Activated CD4-positive, alpha-beta memory T cell treated with anti-CD3 and anti-CD28 coated beads for 36 hours (primary cell): ENCODE measurements at regions of chr1 and their contacts with region 1.

Region 1: DNA sequence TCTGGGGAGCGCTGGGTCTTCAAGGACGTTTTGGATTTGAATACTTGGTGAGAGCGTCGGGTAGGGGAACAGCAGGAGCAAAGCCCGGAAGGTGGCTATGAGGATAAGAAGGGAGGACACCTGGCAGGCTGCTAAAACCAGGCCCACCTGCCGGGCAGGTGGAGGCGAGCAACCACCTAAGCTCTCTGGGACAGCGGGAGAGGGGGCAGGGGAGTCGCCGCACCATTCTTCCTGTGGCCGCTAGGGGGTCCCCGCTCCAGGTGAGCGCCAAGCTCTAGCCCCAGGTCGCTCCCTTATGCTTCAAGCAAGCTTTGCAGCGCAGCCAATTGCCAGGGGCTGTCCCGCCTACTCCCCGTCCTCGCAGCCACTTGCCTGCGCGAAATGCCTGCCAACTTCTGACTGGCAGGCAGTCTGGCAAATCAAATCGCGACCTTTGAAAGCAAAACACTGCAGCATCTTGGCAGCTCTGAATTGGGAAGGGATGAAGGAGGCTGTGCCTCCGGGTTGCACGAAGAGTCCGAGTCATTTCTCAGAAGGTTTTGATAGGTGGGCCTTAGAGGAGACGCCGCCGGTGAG is at the start of gene NIPAL3:
- DNase-seq: peak; percentile 99
- H3K4me3 Mint-ChIP-seq: peak within 1 kb of the TSS; percentile 98
- H3K27ac Mint-ChIP-seq: peak within 1 kb of the TSS; percentile 89
- H3K4me1 Mint-ChIP-seq: peaks cover 51% of the 10 kb centered on the region
- H3K27me3 Mint-ChIP-seq: no peaks in the 10 kb centered on the region
- total RNA-seq, gene NIPAL3: 39.3 to 42.4 TPM

Region 2: GRCh38 chr1:23979878-23980724 is 435.3 kb before region 1 on chr1 and contains the start of gene SRSF10:
- CTCF ChIA-PET with region 1: no interaction called
- POLR2A ChIA-PET with region 1: no interaction called
- intact Hi-C with region 1: loop called (anchors 5 kb)
- DNase-seq: peak; percentile 99
- H3K4me3 Mint-ChIP-seq: peak within 1 kb of the TSS; percentile 92
- H3K27ac Mint-ChIP-seq: peak within 1 kb of the TSS; percentile 100
- H3K4me1 Mint-ChIP-seq: peaks cover 40% of the 10 kb centered on the region
- H3K27me3 Mint-ChIP-seq: no peaks in the 10 kb centered on the region
- total RNA-seq, gene SRSF10: 175 to 184 TPM

Region 3: DNA sequence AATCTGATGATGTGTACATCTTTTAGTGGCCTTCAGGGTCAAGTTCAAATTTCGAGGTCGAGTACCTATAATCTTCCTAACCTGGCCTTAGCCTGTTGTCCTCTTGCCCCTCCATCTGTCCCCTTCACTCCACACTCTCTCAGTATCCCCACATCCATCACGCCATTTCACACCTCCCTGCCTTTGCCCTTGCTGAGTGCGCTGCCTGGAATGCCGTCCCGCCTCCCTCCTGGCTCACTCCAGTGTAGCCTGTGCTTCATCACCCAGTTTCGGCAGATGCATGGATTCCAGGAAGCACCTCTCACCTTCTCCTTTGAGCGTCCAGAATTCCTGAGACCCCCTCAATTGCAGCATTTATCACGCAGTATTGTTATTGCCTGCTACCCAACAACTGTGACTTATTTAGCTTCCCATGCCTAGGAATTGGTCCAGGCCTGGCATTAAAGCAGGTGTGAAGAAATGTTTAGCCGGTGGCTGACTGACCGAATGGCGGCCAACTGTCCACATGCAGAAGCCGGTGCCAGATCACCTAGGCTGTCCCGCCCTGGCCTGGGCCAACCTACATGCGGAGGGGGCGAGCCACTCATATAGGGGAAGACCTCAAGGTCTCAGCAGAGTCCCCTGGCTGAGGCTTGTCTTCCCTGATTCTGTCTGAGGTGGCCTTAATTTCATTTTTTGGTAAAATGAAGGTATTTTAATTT is 338.0 kb before region 1 on chr1:
- CTCF ChIA-PET with region 1: no interaction called
- POLR2A ChIA-PET with region 1: no interaction called
- intact Hi-C with region 1: no loop called
- DNase-seq: no peak
- H3K4me3 Mint-ChIP-seq: no peak overlapping the region
- H3K27ac Mint-ChIP-seq: no peak overlapping the region
- H3K4me1 Mint-ChIP-seq: no peaks in the 10 kb centered on the region
- H3K27me3 Mint-ChIP-seq: no peaks in the 10 kb centered on the region

Region 4: GRCh38 chr1:24385160-24385940 is 30.1 kb before region 1 on chr1:
- CTCF ChIA-PET with region 1: interaction called, 12 read pairs
- POLR2A ChIA-PET with region 1: interaction called, 3 read pairs
- intact Hi-C with region 1: no loop called
- DNase-seq: peak; percentile 64
- H3K4me3 Mint-ChIP-seq: no peak overlapping the region
- H3K27ac Mint-ChIP-seq: peak overlapping the region; percentile 7
- H3K4me1 Mint-ChIP-seq: peaks cover 26% of the 10 kb centered on the region
- H3K27me3 Mint-ChIP-seq: no peaks in the 10 kb centered on the region

Region 5: DNA sequence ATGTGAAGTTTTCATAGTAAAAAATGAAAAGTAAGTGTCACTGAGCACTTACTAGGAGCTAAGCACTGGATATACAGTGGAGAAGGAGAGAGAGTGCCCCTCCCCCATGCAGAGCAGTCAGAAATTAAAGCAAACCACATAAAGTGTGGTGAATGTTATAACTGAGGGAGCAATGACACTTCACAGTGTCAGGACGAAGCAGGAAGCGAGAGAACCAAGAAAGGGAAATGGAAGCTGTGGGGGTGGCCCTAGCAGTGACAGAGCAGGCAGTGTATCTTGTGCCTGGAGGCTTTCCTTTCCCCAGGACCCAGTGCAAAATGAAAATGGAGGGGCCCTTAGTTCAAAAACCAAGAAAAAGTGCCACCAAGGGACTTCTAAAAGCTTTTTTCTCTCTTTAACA is 65.7 kb after region 1 on chr1:
- CTCF ChIA-PET with region 1: interaction called, 15 read pairs
- POLR2A ChIA-PET with region 1: interaction called, 8 read pairs
- intact Hi-C with region 1: loop called (anchors 1 kb)
- DNase-seq: peak; percentile 83
- H3K4me3 Mint-ChIP-seq: peak overlapping the region; percentile 58
- H3K27ac Mint-ChIP-seq: peak overlapping the region; percentile 97
- H3K4me1 Mint-ChIP-seq: peaks cover 60% of the 10 kb centered on the region
- H3K27me3 Mint-ChIP-seq: no peaks in the 10 kb centered on the region

Region 6: DNA sequence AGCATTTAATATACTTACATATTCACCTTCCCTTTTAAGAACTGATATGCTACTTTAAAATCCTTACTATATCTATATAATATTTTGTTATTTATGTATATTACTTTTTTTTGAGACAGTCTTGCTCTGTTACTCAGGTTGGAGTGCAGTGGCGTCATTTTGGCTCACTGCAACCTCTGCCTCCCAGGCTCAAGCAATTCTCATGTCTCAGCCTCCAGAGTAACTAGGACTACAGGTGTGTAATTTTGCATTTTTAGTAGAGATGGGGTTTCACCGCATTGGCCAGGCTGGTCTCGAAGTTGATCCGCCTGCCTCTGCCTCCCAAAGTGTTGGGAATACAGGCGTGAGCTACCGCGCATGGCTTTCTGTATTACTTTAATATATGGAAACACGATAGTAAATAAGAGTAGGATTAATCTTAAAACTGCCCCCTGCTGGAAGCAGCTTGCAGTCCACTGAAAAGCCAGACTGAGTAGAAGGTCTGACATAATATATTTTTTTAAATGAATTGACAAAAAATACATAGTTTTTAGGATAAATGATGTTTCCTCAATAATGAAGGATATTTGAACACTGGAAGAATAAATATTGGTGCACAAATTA is 111.6 kb after region 1 on chr1:
- CTCF ChIA-PET with region 1: interaction called, 79 read pairs
- POLR2A ChIA-PET with region 1: interaction called, 4 read pairs
- intact Hi-C with region 1: loop called (anchors 1 kb)
- DNase-seq: peak; percentile 58
- H3K4me3 Mint-ChIP-seq: no peak overlapping the region
- H3K27ac Mint-ChIP-seq: no peak overlapping the region
- H3K4me1 Mint-ChIP-seq: peaks cover 57% of the 10 kb centered on the region
- H3K27me3 Mint-ChIP-seq: no peaks in the 10 kb centered on the region

Region 7: DNA sequence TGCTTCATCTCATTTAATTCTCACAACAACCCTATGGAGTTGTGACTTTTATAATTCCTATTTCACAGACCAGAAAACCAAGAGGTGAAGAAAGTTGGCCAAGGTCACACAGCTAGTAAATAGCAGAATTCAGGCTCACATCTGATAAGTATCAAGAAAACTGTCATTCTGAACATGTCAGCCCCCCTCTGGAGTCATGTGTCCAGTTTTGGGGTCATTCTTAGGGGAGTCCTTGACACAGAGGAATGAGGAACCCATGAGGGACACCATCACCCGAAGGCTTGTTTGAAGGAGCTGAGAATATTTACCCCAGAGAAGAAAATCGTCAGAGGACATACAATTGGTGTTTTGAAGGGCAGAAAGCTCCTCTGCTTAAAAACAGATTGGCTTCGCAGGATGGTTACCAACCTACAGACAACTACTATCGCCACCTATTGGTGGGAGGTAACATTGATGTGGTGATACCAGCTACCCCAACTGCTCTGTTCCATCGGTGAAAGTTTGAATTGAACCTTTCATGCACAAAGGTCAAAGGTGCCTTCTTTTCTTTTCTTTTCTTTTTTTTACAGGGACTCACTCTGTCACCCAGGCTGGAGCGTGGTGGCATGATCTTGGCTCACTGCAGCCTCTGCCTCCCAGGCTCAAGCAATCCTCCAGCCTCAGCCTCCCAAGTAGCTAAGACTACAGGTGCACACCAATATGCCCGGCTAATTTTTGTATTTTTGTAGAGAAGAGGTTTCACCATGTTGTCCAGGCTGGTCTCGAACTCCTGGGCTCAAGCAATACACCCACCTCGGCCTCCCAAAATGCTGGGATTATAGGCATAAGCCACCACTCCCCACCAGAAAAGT is 171.8 kb after region 1 on chr1:
- CTCF ChIA-PET with region 1: interaction called, 107 read pairs
- POLR2A ChIA-PET with region 1: interaction called, 3 read pairs
- intact Hi-C with region 1: loop called (anchors 1 kb)
- DNase-seq: peak; percentile 49
- H3K4me3 Mint-ChIP-seq: no peak overlapping the region
- H3K27ac Mint-ChIP-seq: peak overlapping the region; percentile 31
- H3K4me1 Mint-ChIP-seq: peaks cover 5% of the 10 kb centered on the region
- H3K27me3 Mint-ChIP-seq: peaks cover 2% of the 10 kb centered on the region

Region 8: DNA sequence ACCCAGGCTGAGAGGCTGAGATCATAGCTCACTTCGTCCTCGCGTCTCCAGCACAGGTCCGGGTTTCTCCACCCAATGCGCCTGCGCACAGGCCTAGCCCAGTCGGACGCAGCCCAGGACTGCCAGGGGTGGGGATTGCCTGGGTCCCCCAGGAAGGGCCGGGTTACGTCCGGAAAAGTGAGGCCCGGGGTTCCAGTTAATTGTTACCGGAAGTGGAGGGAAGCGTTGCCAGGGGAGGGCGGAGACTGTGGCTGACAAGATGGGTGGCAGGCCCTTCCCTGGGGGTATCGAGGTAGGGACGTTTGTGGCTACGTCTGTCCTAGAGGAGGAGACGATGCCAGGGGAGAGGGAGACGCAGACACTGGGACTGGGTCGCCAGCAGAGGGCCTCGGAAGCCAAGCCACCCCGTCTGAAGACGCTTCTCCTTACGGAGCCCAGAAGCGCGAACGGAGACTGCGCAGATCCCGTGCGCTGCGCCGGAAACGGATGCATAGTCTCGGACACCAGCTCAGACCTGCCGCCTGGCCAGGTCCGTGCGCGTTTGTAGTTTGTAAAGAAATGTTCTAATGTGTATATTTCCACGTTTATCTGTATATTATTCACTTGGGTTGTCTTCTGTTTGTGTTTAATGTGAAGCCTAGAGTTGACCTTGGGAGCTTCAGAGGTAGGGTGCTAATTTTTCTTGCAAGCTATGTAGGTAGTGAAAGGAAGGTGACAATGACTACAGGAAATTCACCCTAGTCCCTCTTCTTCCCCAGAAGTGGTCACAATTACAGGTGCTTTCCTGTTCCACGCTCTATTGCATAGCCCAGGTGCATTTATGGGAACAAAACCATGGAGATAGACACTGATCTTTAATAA is 824.5 kb after region 1 on chr1:
- CTCF ChIA-PET with region 1: no interaction called
- POLR2A ChIA-PET with region 1: no interaction called
- intact Hi-C with region 1: loop called (anchors 10 kb)
- DNase-seq: peak; percentile 97
- H3K4me3 Mint-ChIP-seq: peak overlapping the region; percentile 84
- H3K27ac Mint-ChIP-seq: peak overlapping the region; percentile 96
- H3K4me1 Mint-ChIP-seq: peaks cover 51% of the 10 kb centered on the region
- H3K27me3 Mint-ChIP-seq: no peaks in the 10 kb centered on the region

Region 9: GRCh38 chr1:26351591-26352337 is 1936.3 kb after region 1 on chr1:
- CTCF ChIA-PET with region 1: no interaction called
- POLR2A ChIA-PET with region 1: no interaction called
- intact Hi-C with region 1: no loop called
- DNase-seq: no peak
- H3K4me3 Mint-ChIP-seq: no peak overlapping the region
- H3K27ac Mint-ChIP-seq: no peak overlapping the region
- H3K4me1 Mint-ChIP-seq: peaks cover 2% of the 10 kb centered on the region
- H3K27me3 Mint-ChIP-seq: no peaks in the 10 kb centered on the region